ENCODE measurements at regions of chr3 and their contacts with region 1.

Region 1: GRCh38 chr3:50611464-50612233 is at the start of gene CISH:
- DNase-seq: peak; percentile 75 to 94 (median 90)
- ATAC-seq: peak; percentile 64
- H3K4me3 ChIP-seq: peak within 1 kb of the TSS; percentile 89 to 95
- H3K4me3 Mint-ChIP-seq: peak within 1 kb of the TSS; percentile 97
- H3K27ac ChIP-seq: peak within 1 kb of the TSS; percentile 57 to 87
- H3K27ac Mint-ChIP-seq: peak within 1 kb of the TSS; percentile 92
- H3K4me1 ChIP-seq: peaks cover 58% of the 10 kb centered on the region
- H3K4me1 Mint-ChIP-seq: peaks cover 67% of the 10 kb centered on the region
- H3K27me3 ChIP-seq: no peaks in the 10 kb centered on the region
- H3K27me3 Mint-ChIP-seq: no peaks in the 10 kb centered on the region
- CTCF ChIP-seq: no peak
- total RNA-seq, gene CISH: 4.7 to 5.6 TPM

Region 2: DNA sequence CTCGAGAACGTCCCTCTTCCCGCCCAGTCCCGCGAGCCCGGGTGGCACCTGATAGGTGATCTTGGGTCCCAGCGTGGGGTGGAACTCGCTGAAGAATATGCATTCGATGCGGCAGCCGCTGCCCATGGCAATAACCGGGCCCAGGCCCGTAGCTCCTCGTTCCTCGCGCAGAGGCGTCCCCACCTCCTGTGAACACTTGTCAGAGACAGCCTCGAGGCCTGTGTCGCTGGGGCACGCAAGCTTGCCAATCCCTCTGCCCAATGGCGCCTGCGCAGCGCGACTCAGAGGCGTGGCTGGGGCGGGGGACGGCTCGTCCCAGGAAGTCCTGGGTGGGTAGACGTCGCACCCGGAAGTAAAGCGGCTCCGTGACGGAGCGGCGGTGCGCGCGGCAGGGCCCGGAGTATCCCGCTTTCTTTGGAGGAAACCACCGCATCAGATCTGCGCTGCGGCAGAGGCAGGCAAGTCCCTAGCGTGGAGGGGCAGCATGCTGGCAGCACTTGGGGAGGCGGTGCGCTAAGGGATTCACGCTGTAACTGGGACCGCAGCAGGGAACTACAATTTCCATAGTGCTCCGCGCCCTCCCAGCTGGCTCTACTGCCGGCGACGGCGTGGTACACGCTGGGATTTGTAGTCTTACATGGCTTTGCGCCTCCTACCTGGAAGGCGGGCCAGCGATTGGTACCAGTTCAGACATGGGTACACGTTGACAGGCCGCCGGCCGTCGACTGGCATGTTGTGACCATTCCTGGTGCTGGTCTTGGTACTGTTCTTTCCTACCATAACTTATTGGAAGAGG is 260.9 kb before region 1 on chr3 and contains the starts of genes CYB561D2 and NPRL2:
- CTCF ChIA-PET with region 1: interaction called, 4 read pairs
- POLR2A ChIA-PET with region 1: interaction called, 3 read pairs
- intact Hi-C with region 1: loop called (anchors 5 kb)
- DNase-seq: peak; percentile 98 to 100 (median 99)
- ATAC-seq: peak; percentile 88
- H3K4me3 ChIP-seq: peak within 1 kb of the TSS; percentile 79
- H3K4me3 Mint-ChIP-seq: peak within 1 kb of the TSS; percentile 98
- H3K27ac ChIP-seq: peak within 1 kb of the TSS; percentile 83 to 94
- H3K27ac Mint-ChIP-seq: peak within 1 kb of the TSS; percentile 99
- H3K4me1 ChIP-seq: peaks cover 54% of the 10 kb centered on the region
- H3K4me1 Mint-ChIP-seq: peaks cover 65% of the 10 kb centered on the region
- H3K27me3 ChIP-seq: no peaks in the 10 kb centered on the region
- H3K27me3 Mint-ChIP-seq: no peaks in the 10 kb centered on the region
- CTCF ChIP-seq: no peak
- total RNA-seq, gene CYB561D2: 24.2 to 24.3 TPM
- total RNA-seq, gene NPRL2: 28.7 to 30.9 TPM

Region 3: DNA sequence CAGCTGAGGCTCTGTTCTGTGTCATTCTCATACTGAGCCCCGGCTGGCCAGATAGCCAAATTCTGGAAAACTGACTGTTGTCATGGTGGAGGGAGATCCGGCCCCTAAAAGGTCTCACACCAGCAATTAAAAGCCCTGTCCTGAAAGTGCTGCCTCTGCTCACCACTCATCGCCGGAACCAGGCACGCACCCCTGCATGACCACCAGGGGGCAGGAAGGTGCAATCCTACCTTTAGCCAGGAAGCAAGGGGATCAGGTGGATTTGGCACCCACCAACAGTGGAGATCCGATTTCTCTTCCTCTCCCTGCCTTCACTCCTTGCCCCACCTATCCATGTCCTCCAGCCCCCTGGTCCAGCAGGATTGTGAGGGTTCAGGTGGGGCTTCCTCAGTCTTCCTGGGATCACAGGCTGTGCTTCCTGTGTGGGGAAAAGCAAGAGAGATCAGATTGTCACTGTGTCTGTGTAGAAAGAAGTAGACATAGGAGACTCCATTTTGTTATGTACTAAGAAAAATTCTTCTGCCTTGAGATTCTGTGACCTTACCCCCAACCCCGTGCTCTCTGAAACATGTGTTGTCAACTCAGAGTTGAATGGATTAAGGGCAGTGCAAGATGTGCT is 92.1 kb before region 1 on chr3:
- CTCF ChIA-PET with region 1: interaction called, 36 read pairs
- POLR2A ChIA-PET with region 1: no interaction called
- intact Hi-C with region 1: loop called (anchors 1 kb)
- DNase-seq: peak; percentile 32 to 81 (median 73)
- ATAC-seq: peak; percentile 91
- H3K4me3 ChIP-seq: no peak overlapping the region
- H3K4me3 Mint-ChIP-seq: no peak overlapping the region
- H3K27ac ChIP-seq: no peak overlapping the region
- H3K27ac Mint-ChIP-seq: no peak overlapping the region
- H3K4me1 ChIP-seq: no peaks in the 10 kb centered on the region
- H3K4me1 Mint-ChIP-seq: peaks cover 15% of the 10 kb centered on the region
- H3K27me3 ChIP-seq: no peaks in the 10 kb centered on the region
- H3K27me3 Mint-ChIP-seq: no peaks in the 10 kb centered on the region
- CTCF ChIP-seq: peak; percentile 86

Region 4: DNA sequence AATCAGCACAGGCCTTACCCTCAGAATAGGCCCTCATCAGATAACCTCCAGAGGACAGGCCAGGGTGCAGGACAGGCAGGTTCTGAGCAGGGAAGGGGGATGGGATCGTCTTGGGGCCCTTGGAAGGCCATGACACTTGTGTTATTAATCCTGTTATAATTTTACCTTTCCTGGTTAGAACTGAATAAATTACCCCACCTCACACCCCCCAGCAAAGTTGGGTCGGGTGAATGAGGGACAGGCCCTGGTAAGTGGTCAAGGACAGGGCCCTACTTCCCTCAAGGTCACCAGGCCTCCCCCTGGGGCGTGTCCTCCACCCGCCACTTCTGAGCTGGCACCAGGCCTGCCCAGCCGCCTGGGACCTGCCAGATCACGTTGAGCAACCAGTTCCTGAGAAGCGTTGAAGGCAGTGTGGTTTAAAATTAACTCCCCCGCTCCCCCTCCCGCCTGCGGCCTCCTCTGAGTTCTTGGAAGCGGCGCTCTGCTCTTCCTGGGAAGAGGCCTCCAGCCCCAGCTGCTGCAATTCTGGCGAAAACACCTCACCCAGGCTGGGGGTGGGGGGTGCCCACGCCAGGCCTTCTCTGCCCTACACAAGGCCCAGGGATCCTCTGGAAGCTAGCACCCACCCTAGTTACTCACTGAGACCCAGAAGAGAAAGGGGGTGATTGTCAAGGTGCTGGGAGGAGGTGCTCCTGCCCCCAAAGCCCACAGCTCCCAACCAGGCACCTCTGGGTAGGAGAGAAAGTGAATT is 10.6 kb before region 1 on chr3:
- CTCF ChIA-PET with region 1: interaction called, 134 read pairs
- POLR2A ChIA-PET with region 1: interaction called, 25 read pairs
- intact Hi-C with region 1: loop called in 1 of 2 experiments (anchors 1 kb)
- DNase-seq: peak in 8 of 9 experiments; percentile 50 to 83 (median 68)
- ATAC-seq: peak; percentile 62
- H3K4me3 ChIP-seq: peak overlapping the region; percentile 31 to 36
- H3K4me3 Mint-ChIP-seq: peak overlapping the region; percentile 72
- H3K27ac ChIP-seq: peak overlapping the region; percentile 52 to 87
- H3K27ac Mint-ChIP-seq: peak overlapping the region; percentile 94
- H3K4me1 ChIP-seq: peaks cover 77% of the 10 kb centered on the region
- H3K4me1 Mint-ChIP-seq: peaks cover 72% of the 10 kb centered on the region
- H3K27me3 ChIP-seq: no peaks in the 10 kb centered on the region
- H3K27me3 Mint-ChIP-seq: no peaks in the 10 kb centered on the region
- CTCF ChIP-seq: no peak

Region 5: DNA sequence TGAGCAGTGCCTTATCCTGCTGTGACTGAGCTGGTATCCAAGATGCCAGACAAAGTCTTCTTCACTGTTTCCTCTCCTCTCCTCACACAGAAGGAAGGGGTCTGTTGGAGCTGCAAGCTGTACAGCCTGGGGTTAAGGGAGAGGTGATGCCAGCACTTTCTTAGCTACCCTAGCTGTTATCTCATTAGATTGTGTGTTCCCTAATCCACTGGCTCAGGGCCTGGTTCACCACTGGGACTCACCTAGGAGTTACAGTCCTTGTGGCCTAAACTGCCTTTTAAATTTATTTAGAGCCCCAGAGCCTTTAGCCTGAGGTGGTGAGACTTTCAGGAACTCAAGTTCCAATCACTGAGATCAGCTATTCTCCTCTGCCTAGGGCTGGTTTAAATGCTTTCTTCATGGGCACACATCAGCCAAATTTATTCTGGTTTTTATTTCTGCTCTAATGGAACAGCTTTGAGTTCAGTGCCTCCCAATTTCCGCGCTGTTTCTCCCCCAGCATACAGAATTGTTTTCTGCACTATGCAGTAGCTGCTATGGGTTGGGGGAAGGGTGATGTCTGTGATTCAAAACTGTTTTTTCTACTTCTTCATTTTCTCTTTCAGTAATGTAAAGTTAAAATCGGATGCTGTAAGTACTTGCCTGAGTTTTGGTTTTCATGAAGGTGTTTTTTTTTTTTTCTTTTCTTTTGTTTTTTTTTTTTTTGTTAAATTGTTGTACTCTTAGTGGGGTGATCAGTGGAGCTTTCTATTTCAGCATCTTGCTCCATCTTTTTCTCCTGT is 261.9 kb after region 1 on chr3:
- CTCF ChIA-PET with region 1: no interaction called
- POLR2A ChIA-PET with region 1: no interaction called
- intact Hi-C with region 1: no loop called
- DNase-seq: no peak
- ATAC-seq: no peak
- H3K4me3 ChIP-seq: no peak overlapping the region
- H3K4me3 Mint-ChIP-seq: no peak overlapping the region
- H3K27ac ChIP-seq: no peak overlapping the region
- H3K27ac Mint-ChIP-seq: no peak overlapping the region
- H3K4me1 ChIP-seq: no peaks in the 10 kb centered on the region
- H3K4me1 Mint-ChIP-seq: no peaks in the 10 kb centered on the region
- H3K27me3 ChIP-seq: peaks cover 0 to 2% of the 10 kb centered on the region in 2 experiments
- H3K27me3 Mint-ChIP-seq: peaks cover 37% of the 10 kb centered on the region
- CTCF ChIP-seq: no peak

Region 6: DNA sequence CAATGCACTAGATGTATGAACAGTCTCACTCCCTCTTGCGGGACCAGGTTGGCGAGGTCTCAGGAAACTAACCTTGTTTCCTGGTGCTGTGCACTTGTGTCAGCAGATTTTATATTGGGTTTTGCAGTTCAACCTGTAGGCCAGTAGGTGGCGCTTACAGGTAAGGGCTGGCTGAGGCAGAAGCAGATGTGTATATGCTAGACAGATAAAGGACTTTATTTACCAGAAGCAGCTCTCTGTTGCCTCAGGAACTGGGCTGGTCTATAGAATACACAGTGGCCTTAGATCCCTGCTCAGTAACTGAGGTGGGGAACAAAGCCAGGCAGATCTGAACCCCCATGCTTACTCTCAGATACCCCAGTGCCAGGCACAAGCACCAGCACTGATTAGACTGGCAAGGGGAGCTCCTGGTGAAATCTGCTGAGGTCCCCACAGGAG is 359.9 kb after region 1 on chr3:
- CTCF ChIA-PET with region 1: interaction called, 18 read pairs
- POLR2A ChIA-PET with region 1: no interaction called
- intact Hi-C with region 1: loop called (anchors 1 to 2 kb)
- DNase-seq: peak; percentile 6 to 85 (median 55)
- ATAC-seq: peak; percentile 98
- H3K4me3 ChIP-seq: no peak overlapping the region
- H3K4me3 Mint-ChIP-seq: no peak overlapping the region
- H3K27ac ChIP-seq: peak overlapping the region in 1 of 2 experiments; percentile 49
- H3K27ac Mint-ChIP-seq: peak overlapping the region; percentile 41
- H3K4me1 ChIP-seq: peaks cover 10% of the 10 kb centered on the region
- H3K4me1 Mint-ChIP-seq: peaks cover 15% of the 10 kb centered on the region
- H3K27me3 ChIP-seq: no peaks in the 10 kb centered on the region
- H3K27me3 Mint-ChIP-seq: no peaks in the 10 kb centered on the region
- CTCF ChIP-seq: peak; percentile 84

Region 7: GRCh38 chr3:51371943-51372557 is 760.4 kb after region 1 on chr3:
- CTCF ChIA-PET with region 1: interaction called, 38 read pairs
- POLR2A ChIA-PET with region 1: no interaction called
- intact Hi-C with region 1: loop called in 1 of 2 experiments (anchors 1 kb)
- DNase-seq: peak; percentile 23 to 74 (median 51)
- ATAC-seq: peak; percentile 36
- H3K4me3 ChIP-seq: no peak overlapping the region
- H3K4me3 Mint-ChIP-seq: no peak overlapping the region
- H3K27ac ChIP-seq: no peak overlapping the region
- H3K27ac Mint-ChIP-seq: no peak overlapping the region
- H3K4me1 ChIP-seq: no peaks in the 10 kb centered on the region
- H3K4me1 Mint-ChIP-seq: peaks cover 2% of the 10 kb centered on the region
- H3K27me3 ChIP-seq: no peaks in the 10 kb centered on the region
- H3K27me3 Mint-ChIP-seq: peaks cover 2% of the 10 kb centered on the region
- CTCF ChIP-seq: peak; percentile 46

Region 8: GRCh38 chr3:51434746-51435327 is 823.2 kb after region 1 on chr3:
- CTCF ChIA-PET with region 1: interaction called, 13 read pairs
- POLR2A ChIA-PET with region 1: no interaction called
- intact Hi-C with region 1: loop called in 1 of 2 experiments (anchors 1 kb)
- DNase-seq: peak; percentile 1 to 74 (median 45)
- ATAC-seq: peak; percentile 88
- H3K4me3 ChIP-seq: no peak overlapping the region
- H3K4me3 Mint-ChIP-seq: no peak overlapping the region
- H3K27ac ChIP-seq: no peak overlapping the region
- H3K27ac Mint-ChIP-seq: no peak overlapping the region
- H3K4me1 ChIP-seq: no peaks in the 10 kb centered on the region
- H3K4me1 Mint-ChIP-seq: peaks cover 7% of the 10 kb centered on the region
- H3K27me3 ChIP-seq: no peaks in the 10 kb centered on the region
- H3K27me3 Mint-ChIP-seq: no peaks in the 10 kb centered on the region
- CTCF ChIP-seq: peak; percentile 64

Measured in CD8-positive, alpha-beta T cell (primary cell).